ENCODE measurements at regions of chr2 and their contacts with region 1.

Region 1: GRCh38 chr2:231800493-231801091 is 14.3 kb downstream of the COPS7B start:
- DNase-seq: no peak
- ATAC-seq: no peak
- H3K4me3 Mint-ChIP-seq: no peak overlapping the region
- H3K27ac Mint-ChIP-seq: no peak overlapping the region
- H3K4me1 Mint-ChIP-seq: no peaks in the 10 kb centered on the region
- H3K27me3 Mint-ChIP-seq: no peaks in the 10 kb centered on the region
- CTCF ChIP-seq: no peak

Region 2: GRCh38 chr2:231810905-231811304 is 10.3 kb after region 1 on chr2:
- CTCF ChIA-PET with region 1: no interaction called
- POLR2A ChIA-PET with region 1: interaction called, 10 read pairs
- intact Hi-C with region 1: no loop called
- DNase-seq: no peak
- ATAC-seq: no peak
- H3K4me3 Mint-ChIP-seq: no peak overlapping the region
- H3K27ac Mint-ChIP-seq: no peak overlapping the region
- H3K4me1 Mint-ChIP-seq: no peaks in the 10 kb centered on the region
- H3K27me3 Mint-ChIP-seq: no peaks in the 10 kb centered on the region
- CTCF ChIP-seq: no peak

Region 3: GRCh38 chr2:231854671-231855070 is 54.1 kb after region 1 on chr2:
- CTCF ChIA-PET with region 1: no interaction called
- POLR2A ChIA-PET with region 1: no interaction called
- intact Hi-C with region 1: loop called (anchors 5 kb)
- DNase-seq: no peak
- ATAC-seq: no peak
- H3K4me3 Mint-ChIP-seq: no peak overlapping the region
- H3K27ac Mint-ChIP-seq: no peak overlapping the region
- H3K4me1 Mint-ChIP-seq: peaks cover 2% of the 10 kb centered on the region
- H3K27me3 Mint-ChIP-seq: no peaks in the 10 kb centered on the region
- CTCF ChIP-seq: no peak

Region 4: DNA sequence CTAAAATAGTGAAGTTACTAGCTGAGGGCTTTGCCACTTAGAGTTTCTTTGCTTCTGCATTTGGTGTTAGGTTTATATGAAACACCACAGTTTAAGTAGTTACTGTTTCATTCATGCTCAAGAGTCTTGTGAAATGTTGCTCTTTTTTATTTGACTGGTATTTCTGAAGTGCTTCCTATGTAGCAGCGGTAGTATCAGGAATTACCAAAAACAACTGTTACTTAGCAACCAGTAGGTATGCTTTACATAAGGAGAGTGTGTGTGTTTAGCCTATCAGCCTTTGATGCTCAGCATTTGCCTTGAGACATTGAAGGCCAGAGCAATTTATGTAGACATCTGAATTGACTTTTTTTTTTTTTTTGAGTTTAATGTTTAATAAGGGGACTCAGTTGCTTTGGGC is 164.5 kb after region 1 on chr2:
- CTCF ChIA-PET with region 1: no interaction called
- POLR2A ChIA-PET with region 1: no interaction called
- intact Hi-C with region 1: no loop called
- DNase-seq: no peak
- ATAC-seq: no peak
- H3K4me3 Mint-ChIP-seq: no peak overlapping the region
- H3K27ac Mint-ChIP-seq: no peak overlapping the region
- H3K4me1 Mint-ChIP-seq: peaks cover 50% of the 10 kb centered on the region
- H3K27me3 Mint-ChIP-seq: no peaks in the 10 kb centered on the region
- CTCF ChIP-seq: no peak